Activated CD4-positive, alpha-beta T cell treated with anti-CD3 and anti-CD28 coated beads, Interleukin-2, amount 10 ng/mL, durations not matched to agents 24 days and 14 days (primary cell): ENCODE measurements at regions of chr19 and their contacts with region 1.

Region 1: DNA sequence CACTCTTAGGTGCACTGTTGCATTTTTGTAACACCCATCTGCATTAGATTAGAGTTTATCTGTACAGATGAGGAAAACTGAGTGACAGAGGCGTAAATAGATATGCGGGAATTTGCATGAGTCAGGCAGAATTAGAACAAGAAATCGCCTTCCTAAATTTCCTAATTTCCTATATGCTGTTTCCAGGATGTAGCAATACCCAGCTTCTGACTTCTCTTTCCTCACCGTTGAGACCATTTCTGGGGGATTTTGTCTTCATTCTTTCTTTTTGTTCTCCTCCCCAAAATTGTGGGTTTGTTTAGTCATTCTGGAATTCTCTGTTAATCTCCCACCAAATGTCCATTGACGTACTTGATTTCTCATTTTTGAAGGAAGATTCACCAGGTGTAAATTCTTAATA is 10.6 kb upstream of the ZNF792 start:
- DNase-seq: no peak
- H3K4me3 Mint-ChIP-seq: no peak overlapping the region
- H3K27ac Mint-ChIP-seq: no peak overlapping the region
- H3K4me1 Mint-ChIP-seq: peaks cover 14% of the 10 kb centered on the region
- H3K27me3 Mint-ChIP-seq: peaks cover 3% of the 10 kb centered on the region

Region 2: DNA sequence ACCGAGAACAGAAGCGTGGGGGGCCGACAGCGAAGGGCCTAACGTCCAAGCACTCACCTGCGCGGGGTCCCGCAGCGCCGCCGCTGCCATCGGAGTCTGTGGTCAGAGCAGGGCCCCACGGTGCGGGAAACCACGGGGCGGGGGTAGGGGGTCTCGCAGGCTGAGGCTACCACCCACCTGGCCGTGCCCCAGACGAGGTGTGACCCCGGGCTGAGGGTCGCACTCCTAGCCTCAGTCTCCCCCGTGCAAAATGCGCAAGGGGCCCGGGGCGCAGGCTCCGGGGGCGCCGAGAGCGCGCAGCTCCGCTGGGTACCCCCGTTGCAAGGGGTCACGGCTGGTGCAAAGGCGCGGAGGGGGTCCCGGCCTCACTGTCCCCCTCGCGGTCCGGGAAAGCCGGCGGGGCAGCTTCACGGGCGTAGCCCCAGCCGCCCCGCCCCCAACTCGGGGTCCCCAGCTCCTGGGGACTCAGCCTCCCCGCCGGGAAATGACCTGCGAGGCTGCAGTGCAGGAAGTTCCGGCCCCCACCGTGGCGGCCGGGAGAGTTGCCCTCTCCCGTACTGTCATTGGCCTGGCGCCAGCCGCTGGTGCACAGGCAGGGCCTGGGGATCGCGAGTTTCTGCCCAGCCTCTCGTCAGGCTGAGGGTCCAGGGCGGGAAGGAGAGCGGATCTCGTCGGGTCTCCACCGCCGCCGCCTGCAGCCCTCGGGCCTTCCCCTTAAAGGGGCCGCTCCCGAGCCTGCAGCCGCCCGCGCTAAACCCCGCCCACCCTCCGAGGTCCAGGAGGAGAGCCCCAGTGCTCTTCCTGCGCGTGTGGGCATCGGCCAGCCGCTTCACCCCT is 10.9 kb before region 1 on chr19 and contains the start of gene ZNF792:
- intact Hi-C with region 1: loop called (anchors 1 kb)
- DNase-seq: peak; percentile 84
- H3K4me3 Mint-ChIP-seq: peak within 1 kb of the TSS; percentile 96
- H3K27ac Mint-ChIP-seq: peak within 1 kb of the TSS; percentile 87
- H3K4me1 Mint-ChIP-seq: peaks cover 18% of the 10 kb centered on the region
- H3K27me3 Mint-ChIP-seq: no peaks in the 10 kb centered on the region
- total RNA-seq, gene ZNF792: 5.0 and 5.8 TPM in 2 replicates

Region 3: GRCh38 chr19:34990578-34991192 is 16.0 kb after region 1 on chr19:
- intact Hi-C with region 1: loop called (anchors 2 kb)
- DNase-seq: no peak
- H3K4me3 Mint-ChIP-seq: peak overlapping the region; percentile 31
- H3K27ac Mint-ChIP-seq: peak overlapping the region; percentile 94
- H3K4me1 Mint-ChIP-seq: peaks cover 24% of the 10 kb centered on the region
- H3K27me3 Mint-ChIP-seq: peaks cover 2% of the 10 kb centered on the region

Region 4: GRCh38 chr19:35000651-35001424 is 26.2 kb after region 1 on chr19:
- intact Hi-C with region 1: loop called (anchors 1 kb)
- DNase-seq: peak; percentile 85
- H3K4me3 Mint-ChIP-seq: peak overlapping the region; percentile 97
- H3K27ac Mint-ChIP-seq: peak overlapping the region; percentile 95
- H3K4me1 Mint-ChIP-seq: peaks cover 56% of the 10 kb centered on the region
- H3K27me3 Mint-ChIP-seq: no peaks in the 10 kb centered on the region

Region 5: GRCh38 chr19:35013031-35013819 is 38.6 kb after region 1 on chr19:
- intact Hi-C with region 1: loop called (anchors 1 kb)
- DNase-seq: peak; percentile 93
- H3K4me3 Mint-ChIP-seq: peak overlapping the region; percentile 67
- H3K27ac Mint-ChIP-seq: peak overlapping the region; percentile 84
- H3K4me1 Mint-ChIP-seq: peaks cover 38% of the 10 kb centered on the region
- H3K27me3 Mint-ChIP-seq: no peaks in the 10 kb centered on the region

Region 6: GRCh38 chr19:35023428-35023827 is 48.8 kb after region 1 on chr19:
- intact Hi-C with region 1: no loop called
- DNase-seq: no peak
- H3K4me3 Mint-ChIP-seq: no peak overlapping the region
- H3K27ac Mint-ChIP-seq: no peak overlapping the region
- H3K4me1 Mint-ChIP-seq: peaks cover 2% of the 10 kb centered on the region
- H3K27me3 Mint-ChIP-seq: no peaks in the 10 kb centered on the region